ENCODE measurements at regions of chr4 and their contacts with region 1.

Region 1: GRCh38 chr4:16289897-16290554 is 63.8 kb upstream of the TAPT1 start:
- DNase-seq: peak; percentile 60
- ATAC-seq: peak; percentile 38; the same call in 1 of the 2 replicates
- H3K4me3 ChIP-seq: no peak overlapping the region
- H3K27ac ChIP-seq: no peak overlapping the region
- H3K4me1 ChIP-seq: no peaks in the 10 kb centered on the region
- H3K27me3 ChIP-seq: no peaks in the 10 kb centered on the region
- CTCF ChIP-seq: peak; percentile 70

Region 2: DNA sequence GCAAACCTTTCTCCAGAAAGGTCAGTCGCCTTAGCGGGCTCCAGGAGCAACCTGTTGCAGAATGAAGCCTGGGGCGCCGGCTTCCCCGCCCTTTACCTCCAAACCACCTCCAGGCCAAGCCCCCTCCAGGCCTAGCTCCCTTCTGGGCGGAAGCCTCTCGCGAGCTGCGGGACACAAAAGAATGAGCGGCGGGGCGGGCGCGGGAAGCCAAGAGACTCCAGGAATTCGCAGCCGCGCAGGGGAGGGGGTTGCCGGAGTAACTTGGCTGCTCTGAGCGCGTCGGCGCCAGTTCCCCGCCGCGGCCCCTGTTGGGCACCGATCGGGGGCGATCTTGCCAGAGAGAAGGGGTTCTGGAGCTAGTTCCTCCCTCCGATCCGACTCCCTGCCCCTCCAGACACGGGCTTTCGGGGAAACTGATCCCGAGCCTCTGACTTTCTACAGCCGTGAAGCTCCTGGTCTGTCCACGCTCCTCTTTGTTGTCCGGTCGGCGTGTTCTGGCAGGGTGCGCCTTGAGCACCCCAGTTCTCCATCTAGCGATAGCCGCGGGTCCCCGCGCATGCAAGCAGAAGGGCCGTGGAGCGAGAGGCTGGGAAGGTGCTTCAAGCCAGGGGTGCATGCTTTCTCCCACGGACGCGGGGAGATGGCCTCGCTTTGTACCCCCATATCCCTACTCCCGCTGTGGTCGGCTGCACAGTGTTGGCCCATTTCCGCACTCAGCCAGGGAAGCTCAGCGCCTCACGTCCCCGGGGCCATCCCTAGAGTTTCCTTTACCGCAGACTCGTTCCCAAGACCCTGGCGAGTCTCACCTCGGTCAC is 207.4 kb before region 1 on chr4:
- CTCF ChIA-PET with region 1: no interaction called
- POLR2A ChIA-PET with region 1: no interaction called
- intact Hi-C with region 1: no loop called
- DNase-seq: no peak
- ATAC-seq: no peak
- H3K4me3 ChIP-seq: no peak overlapping the region
- H3K27ac ChIP-seq: no peak overlapping the region
- H3K4me1 ChIP-seq: no peaks in the 10 kb centered on the region
- H3K27me3 ChIP-seq: peaks cover 48% of the 10 kb centered on the region
- CTCF ChIP-seq: no peak

Region 3: DNA sequence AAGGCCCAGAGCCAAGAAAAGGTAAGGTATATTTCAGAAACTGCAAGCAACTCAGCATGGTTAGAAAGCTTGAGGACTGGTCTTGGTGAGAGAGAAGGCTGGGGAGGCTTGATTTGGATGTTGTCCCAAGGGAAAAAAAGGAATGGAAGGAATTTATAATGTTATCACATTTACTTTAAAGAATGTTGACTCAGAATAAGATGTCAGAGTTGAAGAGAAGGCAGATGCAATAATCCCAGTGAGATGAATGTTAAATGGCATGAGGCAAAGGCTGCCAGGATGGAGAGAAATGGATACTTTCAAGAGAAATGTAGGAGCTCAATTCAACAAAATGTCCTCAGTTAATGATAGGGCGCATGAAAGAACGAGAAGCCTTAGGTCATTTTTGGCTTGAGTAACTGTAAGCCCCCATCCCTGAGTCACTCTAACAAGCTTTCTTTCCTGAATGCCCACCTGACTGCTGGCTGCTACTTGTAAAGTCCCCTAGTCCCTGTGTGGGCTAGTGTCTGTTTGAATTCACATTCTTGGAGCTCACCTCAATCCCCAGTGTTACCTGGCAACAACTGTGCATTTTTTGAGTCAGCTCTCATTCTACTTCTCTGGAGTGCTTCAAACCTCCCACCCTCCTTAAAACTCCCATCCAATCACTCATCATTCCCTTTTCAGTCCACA is 39.2 kb after region 1 on chr4:
- CTCF ChIA-PET with region 1: no interaction called
- POLR2A ChIA-PET with region 1: no interaction called
- intact Hi-C with region 1: no loop called
- DNase-seq: no peak
- ATAC-seq: no peak
- H3K4me3 ChIP-seq: no peak overlapping the region
- H3K27ac ChIP-seq: no peak overlapping the region
- H3K4me1 ChIP-seq: no peaks in the 10 kb centered on the region
- H3K27me3 ChIP-seq: no peaks in the 10 kb centered on the region
- CTCF ChIP-seq: no peak

Region 4: DNA sequence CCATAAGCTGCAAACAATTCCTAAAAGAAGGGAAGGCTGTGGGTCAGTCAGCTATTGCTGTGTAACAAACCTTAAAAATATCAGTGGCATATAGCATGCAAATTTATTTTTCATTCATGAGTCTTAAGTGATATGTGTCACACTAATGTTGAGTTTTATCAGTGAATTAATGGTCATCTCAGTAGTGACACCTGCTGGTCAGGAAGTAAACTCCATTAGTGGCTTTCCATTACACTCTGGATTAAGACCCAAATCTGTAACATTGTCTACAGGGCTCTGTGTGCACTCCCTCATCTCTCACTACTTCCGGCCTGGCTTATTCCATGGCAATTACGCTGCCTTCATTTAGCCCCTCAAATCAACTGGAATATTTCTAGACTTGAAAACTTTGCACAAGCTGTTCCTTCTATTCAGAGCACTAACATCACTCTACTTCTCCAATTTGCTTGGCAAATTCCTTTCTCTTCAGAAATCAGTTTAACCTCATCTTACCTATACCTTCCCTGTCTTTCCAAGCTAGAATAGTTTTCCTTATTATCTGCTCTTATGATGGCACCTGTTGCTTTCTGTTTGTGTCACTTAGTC is 153.6 kb after region 1 on chr4:
- CTCF ChIA-PET with region 1: no interaction called
- POLR2A ChIA-PET with region 1: no interaction called
- intact Hi-C with region 1: loop called (anchors 1 kb)
- DNase-seq: peak; percentile 61
- ATAC-seq: peak; percentile 66
- H3K4me3 ChIP-seq: no peak overlapping the region
- H3K27ac ChIP-seq: no peak overlapping the region
- H3K4me1 ChIP-seq: peaks cover 10% of the 10 kb centered on the region
- H3K27me3 ChIP-seq: no peaks in the 10 kb centered on the region
- CTCF ChIP-seq: peak; percentile 69

Region 5: DNA sequence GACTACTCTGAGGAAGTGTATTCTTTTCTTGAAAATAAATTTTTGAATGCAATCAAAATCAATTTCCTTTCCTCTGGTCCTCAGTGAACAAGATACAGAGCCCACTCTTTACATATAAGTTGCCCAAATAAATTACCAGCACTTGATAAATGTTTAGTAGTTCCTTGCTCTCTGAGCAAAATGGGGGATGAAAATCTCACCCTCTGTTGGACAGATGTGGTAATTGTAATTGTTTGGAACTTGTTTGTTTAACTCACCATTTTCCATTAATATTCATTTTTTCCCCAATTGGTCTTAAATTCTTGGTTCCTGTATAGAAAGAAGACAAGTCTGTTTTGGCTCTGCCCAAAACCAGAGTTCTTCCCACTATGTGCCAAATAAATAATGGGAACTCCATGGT is 462.1 kb after region 1 on chr4:
- CTCF ChIA-PET with region 1: no interaction called
- POLR2A ChIA-PET with region 1: no interaction called
- intact Hi-C with region 1: loop called (anchors 5 kb)
- DNase-seq: peak; percentile 16
- ATAC-seq: no peak
- H3K4me3 ChIP-seq: no peak overlapping the region
- H3K27ac ChIP-seq: no peak overlapping the region
- H3K4me1 ChIP-seq: no peaks in the 10 kb centered on the region
- H3K27me3 ChIP-seq: peaks cover 53% of the 10 kb centered on the region
- CTCF ChIP-seq: peak; percentile 49

Region 6: DNA sequence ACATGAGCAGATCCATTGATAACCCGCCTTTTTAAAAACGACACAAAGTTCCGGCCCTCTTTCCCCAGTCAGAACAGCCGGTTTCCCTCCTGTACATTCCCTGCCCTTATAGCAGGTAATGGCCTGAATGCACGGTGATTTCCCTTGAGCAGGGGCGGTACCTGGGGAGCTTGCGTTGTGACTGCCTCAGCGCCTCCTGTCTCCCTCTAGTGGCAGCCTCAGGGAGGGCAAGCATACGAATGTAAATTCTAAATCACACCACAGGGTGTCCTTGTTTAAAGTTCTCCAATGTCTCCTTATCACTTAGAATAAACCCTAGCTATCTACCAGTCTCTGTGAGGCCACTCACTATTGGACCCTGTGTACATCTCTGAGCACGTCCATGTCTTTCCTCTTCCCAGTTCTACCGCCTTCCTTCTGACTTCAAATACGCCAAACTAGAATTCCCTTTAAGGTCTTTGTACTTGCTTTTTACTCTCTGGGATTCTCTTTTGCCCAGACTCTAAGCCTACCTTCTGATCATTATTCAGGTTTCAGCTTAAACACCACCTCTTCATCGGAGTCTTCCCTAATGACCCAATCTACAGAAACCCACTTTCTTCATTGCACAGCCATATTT is 626.8 kb after region 1 on chr4:
- CTCF ChIA-PET with region 1: no interaction called
- POLR2A ChIA-PET with region 1: no interaction called
- intact Hi-C with region 1: loop called (anchors 10 kb)
- DNase-seq: peak; percentile 79
- ATAC-seq: peak; percentile 54
- H3K4me3 ChIP-seq: no peak overlapping the region
- H3K27ac ChIP-seq: no peak overlapping the region
- H3K4me1 ChIP-seq: no peaks in the 10 kb centered on the region
- H3K27me3 ChIP-seq: 0 out of 2 replicates have a peak, but pooled peaks cover 6% of the 10 kb centered on the region
- CTCF ChIP-seq: peak; percentile 92

Region 7: DNA sequence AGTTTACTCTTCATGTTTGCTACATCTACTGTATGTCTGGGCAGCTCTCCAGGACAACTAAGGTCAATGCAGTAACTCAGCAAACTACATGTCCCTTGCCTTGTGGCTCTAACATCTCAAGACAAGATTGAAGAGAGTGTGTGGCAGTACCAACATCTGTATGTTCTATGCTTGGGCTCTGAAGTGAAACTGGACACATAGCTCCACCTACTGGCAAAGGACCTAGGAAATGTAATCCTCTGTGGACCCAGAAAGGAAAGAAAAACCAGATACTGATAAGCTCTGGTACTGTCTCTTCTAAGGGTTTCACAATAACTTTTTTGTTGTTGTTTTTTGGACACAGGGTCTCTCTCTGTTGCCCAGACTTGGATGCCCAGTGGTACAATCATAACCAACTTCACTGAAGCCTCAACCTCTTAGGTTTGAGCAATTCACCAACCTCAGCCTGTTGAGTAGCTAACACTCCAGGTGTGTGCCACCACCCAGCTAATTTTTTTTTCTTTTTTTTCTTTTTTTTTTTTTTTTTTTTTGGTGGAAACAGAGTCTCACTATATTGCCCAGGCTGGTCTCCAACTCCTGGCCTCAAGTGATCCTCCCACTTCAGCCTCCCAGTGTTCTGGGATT is 1157.8 kb after region 1 on chr4:
- CTCF ChIA-PET with region 1: interaction called, 3 read pairs
- POLR2A ChIA-PET with region 1: no interaction called
- intact Hi-C with region 1: loop called (anchors 10 kb)
- DNase-seq: peak; percentile 74
- ATAC-seq: peak; percentile 96
- H3K4me3 ChIP-seq: no peak overlapping the region
- H3K27ac ChIP-seq: no peak overlapping the region
- H3K4me1 ChIP-seq: peaks cover 4% of the 10 kb centered on the region; the same call in 1 of the 2 replicates
- H3K27me3 ChIP-seq: no peaks in the 10 kb centered on the region
- CTCF ChIP-seq: peak; percentile 74